Activated CD8-positive, alpha-beta T cell treated with anti-CD3 and anti-CD28 coated beads for 36 hours (primary cell): ENCODE measurements at regions of chr5 and their contacts with region 1.

Region 1: GRCh38 chr5:99032234-99033013 is 103.6 kb upstream of the CHD1 start:
- DNase-seq: peak; percentile 54
- ATAC-seq: peak; percentile 41
- H3K4me3 Mint-ChIP-seq: peak overlapping the region; percentile 74
- H3K27ac Mint-ChIP-seq: peak overlapping the region; percentile 91
- H3K4me1 Mint-ChIP-seq: peaks cover 59% of the 10 kb centered on the region
- H3K27me3 Mint-ChIP-seq: no peaks in the 10 kb centered on the region
- CTCF ChIP-seq: peak; percentile 36

Region 2: GRCh38 chr5:98905857-98906690 is 126.3 kb before region 1 on chr5:
- CTCF ChIA-PET with region 1: interaction called, 6 read pairs
- POLR2A ChIA-PET with region 1: interaction called, 3 read pairs
- intact Hi-C with region 1: loop called (anchors 1 kb)
- DNase-seq: no peak
- ATAC-seq: peak; percentile 71
- H3K4me3 Mint-ChIP-seq: no peak overlapping the region
- H3K27ac Mint-ChIP-seq: no peak overlapping the region
- H3K4me1 Mint-ChIP-seq: peaks cover 55% of the 10 kb centered on the region
- H3K27me3 Mint-ChIP-seq: no peaks in the 10 kb centered on the region
- CTCF ChIP-seq: peak; percentile 86

Region 3: DNA sequence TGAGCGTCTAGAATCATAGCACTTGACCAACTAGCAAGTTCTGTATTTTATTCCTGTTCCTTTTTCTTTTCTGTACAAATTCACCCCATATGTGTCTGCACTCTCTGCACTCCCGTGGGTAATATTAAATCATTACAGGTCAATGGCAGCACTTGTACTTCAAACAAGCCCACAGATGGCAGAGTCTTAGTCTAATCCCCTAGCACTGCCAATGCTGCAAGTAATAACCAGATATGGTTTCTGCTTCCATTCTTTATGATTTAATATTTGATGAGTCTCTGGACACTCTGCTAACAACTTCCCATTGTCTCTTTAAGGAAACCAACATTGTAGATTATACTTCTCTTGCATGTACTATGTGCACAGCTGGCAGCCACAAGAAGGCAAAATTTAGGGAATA is 240.2 kb after region 1 on chr5:
- CTCF ChIA-PET with region 1: no interaction called
- POLR2A ChIA-PET with region 1: no interaction called
- intact Hi-C with region 1: no loop called
- DNase-seq: no peak
- ATAC-seq: no peak
- H3K4me3 Mint-ChIP-seq: no peak overlapping the region
- H3K27ac Mint-ChIP-seq: no peak overlapping the region
- H3K4me1 Mint-ChIP-seq: no peaks in the 10 kb centered on the region
- H3K27me3 Mint-ChIP-seq: no peaks in the 10 kb centered on the region
- CTCF ChIP-seq: no peak